HEK293 (cell line): ENCODE measurements at regions of chr5 and their contacts with region 1.

Region 1: DNA sequence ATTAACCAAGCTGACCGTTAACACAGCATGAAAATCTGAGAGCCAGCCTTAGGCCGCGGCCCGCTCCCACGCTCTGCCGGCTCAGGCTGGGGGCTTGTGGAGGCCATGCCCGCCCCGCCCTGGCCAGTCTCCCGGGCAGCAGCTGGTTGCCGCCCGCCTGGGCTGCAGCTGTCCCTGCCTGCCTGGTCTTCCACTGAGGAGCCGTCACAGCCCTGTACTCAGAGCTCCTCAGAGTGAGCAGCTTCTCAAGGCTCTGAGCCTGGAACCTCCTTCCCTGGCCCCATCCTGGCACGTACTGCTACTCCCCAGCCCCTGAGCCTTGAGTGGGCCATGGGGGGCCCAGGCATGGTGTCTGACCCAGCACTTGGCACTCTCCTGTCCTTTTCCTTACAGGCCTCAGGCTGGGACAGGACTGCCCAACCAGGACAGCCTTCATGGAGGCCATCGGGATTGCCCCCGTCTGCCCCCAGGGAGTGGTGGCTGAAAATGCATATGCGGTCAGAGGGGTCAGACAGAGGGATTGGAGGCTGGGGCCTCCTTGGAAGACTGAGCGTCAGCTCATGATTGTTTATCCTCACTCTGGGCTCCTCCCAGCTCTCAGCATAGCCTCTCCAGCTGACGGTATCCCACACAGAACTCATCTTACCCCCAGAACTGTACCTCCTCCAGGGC is 11.9 kb downstream of the FGFR4 start:
- H3K4me3 ChIP-seq: no peak overlapping the region
- H3K27ac ChIP-seq: no peak overlapping the region
- H3K4me1 ChIP-seq: no peaks in the 10 kb centered on the region
- CTCF ChIP-seq: no peak

Region 2: GRCh38 chr5:177035976-177036375 is 62.6 kb before region 1 on chr5:
- CTCF ChIA-PET with region 1: no interaction called
- POLR2A ChIA-PET with region 1: no interaction called
- H3K4me3 ChIP-seq: no peak overlapping the region
- H3K27ac ChIP-seq: no peak overlapping the region
- H3K4me1 ChIP-seq: no peaks in the 10 kb centered on the region
- CTCF ChIP-seq: no peak

Region 3: GRCh38 chr5:177086924-177087706 is 11.5 kb before region 1 on chr5:
- CTCF ChIA-PET with region 1: interaction called, 17 read pairs
- POLR2A ChIA-PET with region 1: no interaction called
- H3K4me3 ChIP-seq: peak overlapping the region; percentile 47
- H3K27ac ChIP-seq: no peak overlapping the region
- H3K4me1 ChIP-seq: no peaks in the 10 kb centered on the region; the same call in 1 of the 2 replicates
- CTCF ChIP-seq: peak; percentile 95

Region 4: GRCh38 chr5:177568326-177568725 is 469.7 kb after region 1 on chr5:
- CTCF ChIA-PET with region 1: no interaction called
- POLR2A ChIA-PET with region 1: no interaction called
- H3K4me3 ChIP-seq: no peak overlapping the region
- H3K27ac ChIP-seq: no peak overlapping the region
- H3K4me1 ChIP-seq: no peaks in the 10 kb centered on the region
- CTCF ChIP-seq: no peak